Mammary epithelial cell (primary cell): ENCODE measurements at regions of chr14 and their contacts with region 1.

Region 1: GRCh38 chr14:104826189-104826860 is 25.4 kb downstream of the ZBTB42 start:
- DNase-seq: peak; percentile 81
- H3K4me3 ChIP-seq: peak overlapping the region; percentile 56 to 74 (median 58)
- H3K27ac ChIP-seq: no peak overlapping the region
- H3K4me1 ChIP-seq: peaks cover 17% of the 10 kb centered on the region
- H3K27me3 ChIP-seq: no peaks in the 10 kb centered on the region
- CTCF ChIP-seq: peak; percentile 27 to 70

Region 2: GRCh38 chr14:104639889-104640548 is 186.3 kb before region 1 on chr14:
- CTCF ChIA-PET with region 1: no interaction called
- dilution Hi-C with region 1: no loop called
- in situ Hi-C with region 1: no loop called
- intact Hi-C with region 1: loop called (anchors 10 kb)
- DNase-seq: peak; percentile 30
- H3K4me3 ChIP-seq: no peak overlapping the region
- H3K27ac ChIP-seq: no peak overlapping the region
- H3K4me1 ChIP-seq: peaks cover 4% of the 10 kb centered on the region
- H3K27me3 ChIP-seq: no peaks in the 10 kb centered on the region
- CTCF ChIP-seq: peak; percentile 85 to 95

Region 3: GRCh38 chr14:104715422-104715821 is 110.9 kb before region 1 on chr14:
- CTCF ChIA-PET with region 1: no interaction called
- dilution Hi-C with region 1: loop called (anchors 10 kb)
- in situ Hi-C with region 1: no loop called
- intact Hi-C with region 1: no loop called
- DNase-seq: no peak
- H3K4me3 ChIP-seq: no peak overlapping the region
- H3K27ac ChIP-seq: no peak overlapping the region
- H3K4me1 ChIP-seq: no peaks in the 10 kb centered on the region
- H3K27me3 ChIP-seq: no peaks in the 10 kb centered on the region
- CTCF ChIP-seq: no peak

Region 4: DNA sequence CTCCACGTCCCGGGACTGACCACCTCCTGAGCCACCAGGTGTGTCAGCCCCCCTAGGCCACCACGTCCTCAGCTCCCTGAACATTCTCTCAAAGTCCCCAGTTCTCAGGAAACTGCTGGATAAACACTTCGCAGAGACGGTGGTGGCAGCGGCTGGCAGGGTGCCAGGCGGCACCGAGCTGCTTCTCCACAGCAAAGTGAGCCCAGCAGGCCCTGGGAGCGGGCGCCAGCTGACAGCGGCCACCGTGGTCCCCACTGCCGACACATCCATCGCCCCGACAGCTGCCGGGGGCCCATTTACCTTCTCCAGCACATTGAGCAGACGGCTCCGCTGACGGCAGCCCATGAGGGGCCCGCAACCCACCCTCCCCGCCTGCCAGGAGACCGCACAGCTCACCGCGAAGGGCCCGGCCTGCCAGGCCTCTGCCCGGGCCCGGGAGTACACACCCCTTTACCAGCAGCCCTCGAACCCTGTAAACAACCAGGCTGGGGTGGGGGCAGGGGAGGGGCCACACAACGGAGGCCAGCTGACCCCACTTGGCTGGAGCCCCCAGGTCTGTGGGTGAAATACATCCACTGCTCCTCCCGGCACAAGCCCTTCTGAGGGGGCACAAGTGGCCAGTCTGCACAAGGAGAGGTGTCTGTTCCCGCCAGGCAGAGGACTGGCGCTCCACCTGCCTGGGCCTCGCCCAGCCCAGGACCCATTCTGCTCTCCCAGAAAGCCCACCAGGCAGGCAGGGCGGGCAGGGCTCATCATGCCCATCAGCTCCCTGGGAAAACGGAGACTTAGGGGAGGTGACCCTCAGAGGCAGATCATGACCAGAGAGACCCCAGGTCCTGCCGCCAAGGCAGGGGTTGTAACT is 41.2 kb before region 1 on chr14:
- CTCF ChIA-PET with region 1: no interaction called
- dilution Hi-C with region 1: no loop called
- in situ Hi-C with region 1: no loop called
- intact Hi-C with region 1: no loop called
- DNase-seq: no peak
- H3K4me3 ChIP-seq: no peak overlapping the region
- H3K27ac ChIP-seq: no peak overlapping the region
- H3K4me1 ChIP-seq: peaks cover 26% of the 10 kb centered on the region
- H3K27me3 ChIP-seq: no peaks in the 10 kb centered on the region
- CTCF ChIP-seq: no peak

Region 5: GRCh38 chr14:104865644-104866441 is 39.5 kb after region 1 on chr14:
- CTCF ChIA-PET with region 1: no interaction called
- dilution Hi-C with region 1: loop called (anchors 5 kb)
- in situ Hi-C with region 1: no loop called
- intact Hi-C with region 1: loop called (anchors 2 kb)
- DNase-seq: peak; percentile 81
- H3K4me3 ChIP-seq: peak overlapping the region; percentile 85 to 86 (median 85)
- H3K27ac ChIP-seq: peak overlapping the region; percentile 69
- H3K4me1 ChIP-seq: peaks cover 29% of the 10 kb centered on the region
- H3K27me3 ChIP-seq: no peaks in the 10 kb centered on the region
- CTCF ChIP-seq: no peak

Region 6: GRCh38 chr14:104908303-104908702 is 82.0 kb after region 1 on chr14:
- CTCF ChIA-PET with region 1: no interaction called
- dilution Hi-C with region 1: loop called (anchors 10 kb)
- in situ Hi-C with region 1: no loop called
- intact Hi-C with region 1: no loop called
- DNase-seq: no peak
- H3K4me3 ChIP-seq: no peak overlapping the region
- H3K27ac ChIP-seq: no peak overlapping the region
- H3K4me1 ChIP-seq: no peaks in the 10 kb centered on the region
- H3K27me3 ChIP-seq: no peaks in the 10 kb centered on the region
- CTCF ChIP-seq: no peak

Region 7: DNA sequence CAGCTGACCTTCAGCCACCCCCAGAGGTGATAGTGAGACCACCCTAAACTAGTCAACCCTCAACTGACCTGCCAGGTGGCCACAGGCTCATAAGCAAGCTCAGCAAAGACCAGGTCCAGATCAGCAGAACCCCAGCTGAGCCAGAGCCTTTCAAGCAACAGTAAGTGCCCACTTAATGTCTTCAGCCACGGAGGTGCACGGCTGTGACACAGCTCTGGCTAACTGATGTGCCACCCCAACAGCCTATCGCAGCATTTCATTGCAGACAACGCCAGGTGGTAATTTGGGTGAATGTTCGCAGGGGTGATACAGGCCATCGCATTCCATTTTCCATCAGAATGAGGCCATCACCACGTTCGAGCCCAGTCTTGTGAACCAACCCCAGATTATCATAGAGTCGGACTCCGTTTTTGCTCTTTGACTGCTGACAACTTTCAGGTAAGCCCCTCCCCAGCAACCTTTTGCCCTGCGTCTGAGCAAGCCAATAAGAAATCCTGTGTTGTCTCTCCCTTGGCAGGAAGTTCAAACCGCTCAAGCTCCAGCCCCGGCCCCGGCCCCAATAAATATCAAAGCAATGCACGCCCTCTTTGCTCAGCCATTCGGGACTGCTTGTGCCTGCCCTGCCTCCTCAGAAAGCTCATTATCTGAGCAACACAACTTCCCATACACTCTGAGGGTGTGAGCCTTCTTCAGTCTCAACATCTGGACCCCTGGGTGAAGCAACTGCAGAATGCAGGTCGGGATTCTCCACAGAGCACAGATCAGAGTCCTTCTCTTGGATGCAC is 297.8 kb after region 1 on chr14:
- CTCF ChIA-PET with region 1: no interaction called
- dilution Hi-C with region 1: no loop called
- in situ Hi-C with region 1: no loop called
- intact Hi-C with region 1: no loop called
- DNase-seq: no peak
- H3K4me3 ChIP-seq: no peak overlapping the region
- H3K27ac ChIP-seq: no peak overlapping the region
- H3K4me1 ChIP-seq: peaks cover 12% of the 10 kb centered on the region
- H3K27me3 ChIP-seq: no peaks in the 10 kb centered on the region
- CTCF ChIP-seq: no peak